Activated B cell treated with CpG ODN at 0.5 μM for 24 hours (primary cell): ENCODE measurements at regions of chr13 and their contacts with region 1.

Region 1: DNA sequence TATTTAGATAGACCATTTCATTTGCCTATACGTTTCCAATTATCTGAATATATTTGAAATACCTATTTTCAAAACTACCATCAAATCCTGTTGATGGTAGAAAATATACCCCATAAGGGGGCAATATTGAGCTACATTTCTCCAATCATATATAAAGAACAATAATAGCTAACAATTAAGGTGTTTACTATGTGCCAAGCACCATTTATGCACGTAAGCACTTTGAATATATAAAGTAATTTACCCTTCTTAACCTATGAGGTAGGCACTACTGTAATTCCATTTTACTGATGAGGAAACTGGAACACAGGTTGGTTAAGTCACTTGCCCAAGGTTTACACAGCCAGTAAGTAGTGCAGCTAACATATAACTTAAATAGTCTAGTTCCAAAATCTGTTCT is 79.2 kb downstream of the UBL3 start:
- DNase-seq: no peak
- ATAC-seq: peak; percentile 49
- H3K4me3 Mint-ChIP-seq: no peak overlapping the region
- H3K27ac Mint-ChIP-seq: no peak overlapping the region
- H3K4me1 Mint-ChIP-seq: peaks cover 5% of the 10 kb centered on the region
- H3K27me3 Mint-ChIP-seq: no peaks in the 10 kb centered on the region
- CTCF ChIP-seq: peak; percentile 29

Region 2: GRCh38 chr13:29508130-29508875 is 262.9 kb before region 1 on chr13:
- CTCF ChIA-PET with region 1: interaction called, 4 read pairs
- POLR2A ChIA-PET with region 1: no interaction called
- intact Hi-C with region 1: loop called (anchors 1 kb)
- DNase-seq: peak; percentile 62
- ATAC-seq: peak; percentile 85
- H3K4me3 Mint-ChIP-seq: no peak overlapping the region
- H3K27ac Mint-ChIP-seq: peak overlapping the region; percentile 46
- H3K4me1 Mint-ChIP-seq: peaks cover 5% of the 10 kb centered on the region
- H3K27me3 Mint-ChIP-seq: peaks cover 17% of the 10 kb centered on the region
- CTCF ChIP-seq: peak; percentile 73

Region 3: GRCh38 chr13:29749401-29750182 is 21.7 kb before region 1 on chr13:
- CTCF ChIA-PET with region 1: no interaction called
- POLR2A ChIA-PET with region 1: no interaction called
- intact Hi-C with region 1: loop called (anchors 2 kb)
- DNase-seq: no peak
- ATAC-seq: no peak
- H3K4me3 Mint-ChIP-seq: no peak overlapping the region
- H3K27ac Mint-ChIP-seq: no peak overlapping the region
- H3K4me1 Mint-ChIP-seq: peaks cover 6% of the 10 kb centered on the region
- H3K27me3 Mint-ChIP-seq: peaks cover 12% of the 10 kb centered on the region
- CTCF ChIP-seq: no peak

Region 4: GRCh38 chr13:29758531-29759114 is 12.6 kb before region 1 on chr13:
- CTCF ChIA-PET with region 1: interaction called, 21 read pairs
- POLR2A ChIA-PET with region 1: no interaction called
- intact Hi-C with region 1: no loop called
- DNase-seq: peak; percentile 22
- ATAC-seq: peak; percentile 84
- H3K4me3 Mint-ChIP-seq: peak overlapping the region; percentile 45
- H3K27ac Mint-ChIP-seq: peak overlapping the region; percentile 54
- H3K4me1 Mint-ChIP-seq: peaks cover 40% of the 10 kb centered on the region
- H3K27me3 Mint-ChIP-seq: no peaks in the 10 kb centered on the region
- CTCF ChIP-seq: no peak

Region 5: GRCh38 chr13:29817604-29818378 is 46.5 kb after region 1 on chr13:
- CTCF ChIA-PET with region 1: interaction called, 5 read pairs
- POLR2A ChIA-PET with region 1: no interaction called
- intact Hi-C with region 1: loop called (anchors 5 kb)
- DNase-seq: no peak
- ATAC-seq: peak; percentile 98
- H3K4me3 Mint-ChIP-seq: peak overlapping the region; percentile 68
- H3K27ac Mint-ChIP-seq: peak overlapping the region; percentile 73
- H3K4me1 Mint-ChIP-seq: peaks cover 66% of the 10 kb centered on the region
- H3K27me3 Mint-ChIP-seq: no peaks in the 10 kb centered on the region
- CTCF ChIP-seq: no peak

Region 6: GRCh38 chr13:29877456-29878078 is 106.3 kb after region 1 on chr13:
- CTCF ChIA-PET with region 1: no interaction called
- POLR2A ChIA-PET with region 1: no interaction called
- intact Hi-C with region 1: no loop called
- DNase-seq: no peak
- ATAC-seq: no peak
- H3K4me3 Mint-ChIP-seq: no peak overlapping the region
- H3K27ac Mint-ChIP-seq: no peak overlapping the region
- H3K4me1 Mint-ChIP-seq: no peaks in the 10 kb centered on the region
- H3K27me3 Mint-ChIP-seq: peaks cover 22% of the 10 kb centered on the region
- CTCF ChIP-seq: no peak

Region 7: GRCh38 chr13:29923554-29924481 is 152.6 kb after region 1 on chr13:
- CTCF ChIA-PET with region 1: interaction called, 204 read pairs
- POLR2A ChIA-PET with region 1: interaction called, 3 read pairs
- intact Hi-C with region 1: loop called (anchors 1 kb)
- DNase-seq: peak; percentile 40
- ATAC-seq: peak; percentile 65
- H3K4me3 Mint-ChIP-seq: no peak overlapping the region
- H3K27ac Mint-ChIP-seq: no peak overlapping the region
- H3K4me1 Mint-ChIP-seq: no peaks in the 10 kb centered on the region
- H3K27me3 Mint-ChIP-seq: peaks cover 5% of the 10 kb centered on the region
- CTCF ChIP-seq: peak; percentile 85

Region 8: DNA sequence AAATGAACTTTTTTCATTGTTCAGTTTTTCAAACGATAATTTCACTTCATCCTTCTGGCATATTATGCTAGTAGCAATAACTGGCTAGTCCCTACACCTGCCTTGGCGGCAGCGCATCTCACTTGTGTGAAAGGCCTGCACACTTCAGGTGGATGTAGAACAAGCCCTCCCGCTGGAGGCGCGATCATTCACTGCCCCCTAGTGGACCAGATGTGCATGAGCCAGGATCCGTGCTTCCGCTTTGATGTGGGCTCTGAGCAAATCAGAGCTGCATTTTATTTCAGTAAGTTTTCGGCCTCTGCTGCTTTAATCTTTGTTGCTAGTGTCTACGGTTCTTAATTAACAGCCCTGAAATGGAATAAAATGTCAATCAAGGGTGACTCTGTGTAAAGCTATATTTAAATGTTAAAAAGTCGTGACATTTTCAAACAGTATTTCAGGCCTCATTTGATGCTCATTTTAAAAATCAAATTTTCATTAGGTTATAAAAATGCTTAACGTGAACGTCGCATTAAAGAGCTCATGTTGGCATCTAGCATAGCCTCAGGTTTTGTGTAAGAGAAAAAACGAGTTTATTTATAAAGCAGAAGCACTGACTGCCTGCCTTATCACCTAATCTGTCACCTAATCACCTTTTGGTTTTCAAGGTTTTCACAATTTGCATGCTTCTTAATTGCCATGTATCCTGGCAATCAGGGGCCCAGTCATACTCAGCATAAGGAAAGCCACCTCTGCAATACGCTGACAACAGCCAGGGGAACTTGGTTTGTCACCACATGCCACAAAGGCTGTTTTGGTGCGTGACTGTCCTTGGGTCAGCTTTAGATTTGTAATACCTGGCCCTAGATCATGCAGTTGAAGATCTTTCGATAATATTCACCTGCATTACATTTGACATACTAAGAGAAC is 1273.4 kb after region 1 on chr13:
- CTCF ChIA-PET with region 1: interaction called, 4 read pairs
- POLR2A ChIA-PET with region 1: no interaction called
- intact Hi-C with region 1: loop called (anchors 10 kb)
- DNase-seq: peak; percentile 51
- ATAC-seq: peak; percentile 99
- H3K4me3 Mint-ChIP-seq: peak overlapping the region; percentile 4
- H3K27ac Mint-ChIP-seq: no peak overlapping the region
- H3K4me1 Mint-ChIP-seq: peaks cover 21% of the 10 kb centered on the region
- H3K27me3 Mint-ChIP-seq: peaks cover 28% of the 10 kb centered on the region
- CTCF ChIP-seq: peak; percentile 34